ENCODE measurements at regions of chrX and their contacts with region 1.

Region 1: DNA sequence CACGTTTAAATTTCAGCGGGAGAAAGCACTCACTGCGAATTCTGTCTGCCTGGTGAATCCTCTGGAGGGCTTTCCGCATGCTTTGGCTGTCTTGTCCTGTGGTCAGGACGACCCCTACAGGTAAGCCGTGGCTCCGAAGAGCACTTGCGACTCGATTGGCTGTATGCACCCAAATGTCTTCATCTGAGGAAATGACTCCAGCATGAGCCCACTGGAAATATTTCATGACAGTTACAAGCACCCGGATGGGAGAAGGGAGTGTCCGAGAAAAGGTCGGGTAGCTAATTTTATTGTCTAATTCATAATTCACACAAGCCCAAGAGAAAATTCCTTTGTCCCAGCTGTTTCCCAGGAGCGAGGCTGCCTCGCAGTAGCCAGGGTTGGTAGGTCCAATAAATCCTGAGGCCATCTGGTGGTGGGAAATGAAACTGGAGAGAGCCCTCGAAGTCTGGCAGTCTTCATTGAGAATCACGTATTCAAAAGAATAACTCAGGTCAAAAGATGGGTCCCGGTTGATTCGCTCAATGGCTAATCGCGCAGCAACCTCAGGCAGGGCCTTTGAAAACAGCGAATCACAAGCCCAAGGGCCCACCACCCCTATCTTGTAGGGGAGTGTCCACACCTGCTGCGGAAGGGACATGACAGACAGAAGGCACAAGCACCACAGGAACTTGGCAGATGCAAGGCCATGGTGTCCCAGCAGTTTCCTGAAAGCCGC is 6.6 kb downstream of the GUCY2F start:
- DNase-seq: peak; percentile 34
- ATAC-seq: peak; percentile 78
- H3K4me3 ChIP-seq: no peak overlapping the region
- H3K27ac ChIP-seq: no peak overlapping the region
- H3K4me1 ChIP-seq: no peaks in the 10 kb centered on the region
- H3K27me3 ChIP-seq: peaks cover 8% of the 10 kb centered on the region
- CTCF ChIP-seq: peak; percentile 50
- POLR2A ChIP-seq: no peak
- RAD21 ChIP-seq: peak; percentile 28

Region 2: DNA sequence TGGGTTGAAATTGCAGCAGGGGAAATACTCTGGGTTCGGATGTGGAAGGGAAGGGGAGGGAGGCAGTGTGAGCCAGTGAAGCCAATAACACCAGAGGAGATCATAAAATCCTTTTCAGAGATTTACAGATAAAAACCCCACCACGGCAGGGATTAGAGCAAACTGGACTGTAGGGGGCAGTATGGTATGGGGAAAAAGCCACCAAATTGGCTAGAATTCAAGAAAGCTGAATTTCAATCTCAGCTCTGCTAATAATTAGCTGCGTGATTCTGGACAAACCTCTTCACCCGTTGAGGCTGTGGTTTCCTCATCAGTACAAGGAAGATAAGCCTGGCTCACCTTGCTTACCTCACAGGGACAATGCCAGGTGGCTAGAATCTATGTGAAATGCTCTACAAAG is 1275.6 kb before region 1 on chrX:
- CTCF ChIA-PET with region 1: no interaction called
- POLR2A ChIA-PET with region 1: no interaction called
- dilution Hi-C with region 1: no loop called
- in situ Hi-C with region 1: no loop called
- intact Hi-C with region 1: loop called (anchors 5 kb)
- DNase-seq: peak; percentile 22
- ATAC-seq: no peak; the same call in 1 of the 2 replicates
- H3K4me3 ChIP-seq: no peak overlapping the region
- H3K27ac ChIP-seq: no peak overlapping the region
- H3K4me1 ChIP-seq: no peaks in the 10 kb centered on the region
- H3K27me3 ChIP-seq: peaks cover 17% of the 10 kb centered on the region
- CTCF ChIP-seq: peak; percentile 55
- POLR2A ChIP-seq: no peak
- RAD21 ChIP-seq: peak; percentile 54

Region 3: DNA sequence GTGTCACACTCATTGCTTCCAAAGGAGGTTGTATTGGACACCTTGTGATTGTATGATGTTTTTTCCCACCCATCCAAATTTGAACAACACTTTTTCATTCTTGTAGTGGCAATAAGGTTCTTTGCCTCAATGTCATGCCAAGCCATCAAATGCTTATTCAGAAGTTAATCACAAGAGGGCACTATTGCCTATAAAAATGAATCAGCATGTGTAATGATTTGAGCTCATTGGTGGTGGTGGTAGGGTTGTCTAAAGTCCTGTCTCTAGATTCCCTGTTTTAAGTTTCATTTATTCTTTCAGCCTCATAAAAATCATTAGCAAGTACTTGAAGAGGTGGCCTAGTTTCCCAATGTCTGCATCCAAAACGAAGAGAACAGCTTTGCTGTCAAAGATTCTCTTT is 776.0 kb before region 1 on chrX:
- CTCF ChIA-PET with region 1: no interaction called
- POLR2A ChIA-PET with region 1: no interaction called
- dilution Hi-C with region 1: no loop called
- in situ Hi-C with region 1: no loop called
- intact Hi-C with region 1: loop called (anchors 5 kb)
- DNase-seq: peak; percentile 14
- ATAC-seq: no peak
- H3K4me3 ChIP-seq: no peak overlapping the region
- H3K27ac ChIP-seq: no peak overlapping the region
- H3K4me1 ChIP-seq: no peaks in the 10 kb centered on the region
- H3K27me3 ChIP-seq: no peaks in the 10 kb centered on the region; the same call in 1 of the 2 replicates
- CTCF ChIP-seq: 0 out of 2 replicates have a peak, but pooled peaks have one; percentile 26
- POLR2A ChIP-seq: no peak
- RAD21 ChIP-seq: peak; percentile 28; the same call in 1 of the 2 replicates

Region 4: DNA sequence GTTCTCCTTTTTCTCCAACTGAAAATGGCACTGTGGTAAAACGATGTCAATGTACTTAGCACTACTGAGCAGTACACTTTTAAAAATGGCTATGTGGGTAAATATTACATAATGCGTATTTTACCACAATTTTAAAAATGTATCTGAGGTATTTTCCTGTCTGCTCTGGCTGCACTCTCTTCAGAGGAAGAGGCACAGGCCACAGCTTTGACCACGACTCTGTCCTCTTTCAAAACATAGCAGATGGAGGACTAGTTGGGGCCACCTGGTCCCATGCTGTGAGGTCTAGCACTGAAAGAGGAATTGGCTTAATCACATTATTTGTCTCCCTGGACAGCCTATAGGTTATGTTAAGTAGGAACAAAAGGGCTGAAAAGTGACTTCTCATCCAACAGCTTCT is 144.4 kb after region 1 on chrX:
- CTCF ChIA-PET with region 1: no interaction called
- POLR2A ChIA-PET with region 1: no interaction called
- dilution Hi-C with region 1: no loop called
- in situ Hi-C with region 1: no loop called
- intact Hi-C with region 1: no loop called
- DNase-seq: no peak
- ATAC-seq: no peak
- H3K4me3 ChIP-seq: no peak overlapping the region
- H3K27ac ChIP-seq: no peak overlapping the region
- H3K4me1 ChIP-seq: no peaks in the 10 kb centered on the region
- H3K27me3 ChIP-seq: no peaks in the 10 kb centered on the region; the same call in none of the 2 replicates
- CTCF ChIP-seq: no peak
- POLR2A ChIP-seq: no peak
- RAD21 ChIP-seq: no peak

Region 5: DNA sequence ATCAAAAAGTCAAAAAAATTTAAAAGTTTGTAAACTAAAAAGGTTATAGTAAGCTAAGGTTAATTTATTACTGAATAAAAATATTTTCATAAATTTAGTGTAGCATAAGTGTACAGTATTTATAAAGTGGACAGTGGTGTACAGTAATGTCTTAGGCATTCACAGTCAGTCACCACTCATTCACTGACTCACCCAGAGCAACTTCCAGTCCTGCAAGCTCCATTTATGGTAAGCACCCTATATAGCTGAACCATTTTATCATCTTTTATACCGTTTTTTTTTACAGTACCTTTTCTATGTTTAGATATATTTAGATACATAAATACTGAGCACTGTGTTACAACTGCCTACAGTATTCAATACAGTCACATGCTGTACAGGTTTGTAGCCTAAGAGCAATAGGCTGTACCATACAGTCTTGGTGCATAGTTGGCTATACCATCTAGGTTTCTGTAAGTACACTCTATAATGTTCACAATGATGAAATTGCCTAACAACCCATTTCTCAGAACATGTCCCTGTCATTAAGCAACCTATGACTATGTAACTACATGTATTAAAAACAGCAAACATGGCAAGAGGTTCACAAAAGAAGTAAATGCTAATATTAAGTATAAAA is 239.1 kb after region 1 on chrX:
- CTCF ChIA-PET with region 1: no interaction called
- POLR2A ChIA-PET with region 1: no interaction called
- dilution Hi-C with region 1: no loop called
- in situ Hi-C with region 1: no loop called
- intact Hi-C with region 1: loop called (anchors 5 kb)
- DNase-seq: peak; percentile 91
- ATAC-seq: peak; percentile 80
- H3K4me3 ChIP-seq: no peak overlapping the region
- H3K27ac ChIP-seq: peak overlapping the region; percentile 96
- H3K4me1 ChIP-seq: peaks cover 2% of the 10 kb centered on the region
- H3K27me3 ChIP-seq: no peaks in the 10 kb centered on the region
- CTCF ChIP-seq: no peak
- POLR2A ChIP-seq: no peak
- RAD21 ChIP-seq: no peak